Panc1 (cell line): ENCODE measurements at regions of chr1 and their contacts with region 1.

Region 1: GRCh38 chr1:183764981-183765380 is 39.9 kb upstream of the RGL1 start:
- DNase-seq: no peak
- ATAC-seq: no peak
- H3K4me3 ChIP-seq: no peak overlapping the region
- H3K27ac ChIP-seq: no peak overlapping the region
- H3K4me1 ChIP-seq: no peaks in the 10 kb centered on the region
- H3K27me3 ChIP-seq: no peaks in the 10 kb centered on the region
- CTCF ChIP-seq: no peak

Region 2: DNA sequence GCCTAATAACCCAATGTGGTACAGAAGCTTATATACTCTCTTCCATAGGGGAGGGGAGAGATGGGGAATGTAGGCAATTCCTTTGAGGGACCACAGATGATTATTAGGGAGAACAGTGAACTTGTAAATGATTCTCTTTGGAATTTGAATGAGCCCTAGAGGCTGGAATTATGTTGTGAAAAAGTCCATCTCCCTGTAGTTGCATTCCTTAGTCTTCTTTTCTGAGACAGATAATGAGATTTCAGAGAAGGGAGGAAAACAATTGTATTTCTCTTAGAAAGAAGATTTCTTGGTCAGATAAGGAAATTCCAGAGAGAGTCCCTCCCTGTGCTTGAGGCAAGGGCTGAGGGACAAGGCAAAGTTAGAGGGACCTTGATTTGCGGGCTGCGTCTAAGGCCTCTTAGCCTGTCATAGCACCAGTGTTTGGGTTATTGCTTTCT is 1880.2 kb after region 1 on chr1:
- CTCF ChIA-PET with region 1: interaction called, 12 read pairs
- POLR2A ChIA-PET with region 1: no interaction called
- in situ Hi-C with region 1: no loop called
- intact Hi-C with region 1: no loop called
- DNase-seq: no peak
- ATAC-seq: peak; percentile 20; the same call in 1 of the 2 replicates
- H3K4me3 ChIP-seq: no peak overlapping the region
- H3K27ac ChIP-seq: peak overlapping the region; percentile 94
- H3K4me1 ChIP-seq: peaks cover 22% of the 10 kb centered on the region
- H3K27me3 ChIP-seq: no peaks in the 10 kb centered on the region
- CTCF ChIP-seq: no peak